Activated T-helper 2 cell treated with anti-CD3 and anti-CD28 coated beads, Interferon-gamma antibody, Interleukin-2, Interleukin-4, amounts not matched to agents 10 μg/mL and 5 μg/mL and 100 μg/mL, durations not matched to agents 14 hours and 24 hours and 36 hours (primary cell): ENCODE measurements at regions of chr16 and their contacts with region 1.

Region 1: GRCh38 chr16:8958344-8959167 is 5.2 kb downstream of the USP7 start:
- DNase-seq: peak; percentile 18
- H3K4me3 Mint-ChIP-seq: peak overlapping the region; percentile 75
- H3K27ac Mint-ChIP-seq: peak overlapping the region; percentile 77
- H3K4me1 Mint-ChIP-seq: peaks cover 67% of the 10 kb centered on the region
- H3K27me3 Mint-ChIP-seq: no peaks in the 10 kb centered on the region

Region 2: DNA sequence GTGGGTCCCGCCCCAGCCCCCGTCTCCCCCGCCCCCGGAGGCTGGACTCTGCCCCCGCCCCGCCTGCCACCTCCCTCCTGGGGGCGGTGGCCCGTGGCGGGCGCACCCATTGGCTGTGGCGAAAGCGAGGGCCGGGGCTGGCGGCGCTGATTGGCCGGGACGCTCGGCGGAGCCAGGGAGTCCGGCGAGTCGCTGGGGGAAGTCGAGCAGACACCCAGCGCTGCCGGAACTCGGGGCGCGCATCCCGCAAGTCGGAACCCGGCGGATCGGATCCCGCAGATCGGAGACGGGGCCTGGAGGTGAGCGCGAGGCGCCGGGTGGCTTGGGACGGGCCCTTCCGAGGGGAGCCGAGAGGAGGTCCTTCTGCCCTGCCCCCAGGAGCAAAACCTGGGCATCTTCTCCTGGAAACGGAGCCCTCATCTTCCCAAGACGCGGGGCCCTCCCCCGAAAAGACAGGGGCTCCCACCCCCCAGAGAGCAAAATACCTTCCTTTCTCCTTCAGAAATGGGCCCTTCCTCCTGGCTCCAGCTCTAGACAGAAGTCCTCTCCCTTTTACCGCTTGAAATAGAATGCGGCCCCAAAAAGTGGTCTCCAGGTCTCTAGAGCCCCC is 284.0 kb before region 1 on chr16 and contains the start of gene ABAT:
- intact Hi-C with region 1: loop called (anchors 5 kb)
- DNase-seq: peak; percentile 90
- H3K4me3 Mint-ChIP-seq: peak within 1 kb of the TSS; percentile 95
- H3K27ac Mint-ChIP-seq: peak within 1 kb of the TSS; percentile 95
- H3K4me1 Mint-ChIP-seq: peaks cover 38% of the 10 kb centered on the region
- H3K27me3 Mint-ChIP-seq: no peaks in the 10 kb centered on the region
- total RNA-seq, gene ABAT: 22.5 and 24.2 TPM in 2 replicates

Region 3: GRCh38 chr16:8936421-8936820 is 22.1 kb before region 1 on chr16:
- intact Hi-C with region 1: loop called (anchors 2 kb)
- DNase-seq: peak; percentile 62
- H3K4me3 Mint-ChIP-seq: no peak overlapping the region
- H3K27ac Mint-ChIP-seq: peak overlapping the region; percentile 36
- H3K4me1 Mint-ChIP-seq: peaks cover 41% of the 10 kb centered on the region
- H3K27me3 Mint-ChIP-seq: no peaks in the 10 kb centered on the region

Region 4: GRCh38 chr16:8943966-8944759 is 14.4 kb before region 1 on chr16:
- intact Hi-C with region 1: loop called (anchors 2 kb)
- DNase-seq: no peak
- H3K4me3 Mint-ChIP-seq: no peak overlapping the region
- H3K27ac Mint-ChIP-seq: peak overlapping the region; percentile 49
- H3K4me1 Mint-ChIP-seq: peaks cover 57% of the 10 kb centered on the region
- H3K27me3 Mint-ChIP-seq: no peaks in the 10 kb centered on the region

Region 5: DNA sequence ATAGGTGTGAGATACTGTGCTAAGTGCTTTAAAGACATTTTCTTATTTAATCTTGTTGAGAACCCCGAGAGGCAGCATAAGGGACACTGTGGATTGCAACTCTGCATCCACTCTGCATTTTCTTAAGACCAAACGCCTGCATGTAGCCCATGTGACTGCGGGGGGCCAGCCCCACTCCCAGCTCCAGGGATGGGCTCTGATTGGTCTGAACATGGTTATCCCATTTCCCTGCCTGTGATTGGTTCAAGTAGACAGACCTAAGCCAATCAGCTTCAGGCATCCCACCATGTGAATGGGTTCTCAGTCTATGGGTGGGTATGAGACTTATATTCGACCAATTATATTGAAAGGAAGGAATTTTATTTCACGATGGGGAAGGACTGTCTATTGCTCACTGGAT is 38.3 kb after region 1 on chr16:
- intact Hi-C with region 1: no loop called
- DNase-seq: no peak
- H3K4me3 Mint-ChIP-seq: no peak overlapping the region
- H3K27ac Mint-ChIP-seq: no peak overlapping the region
- H3K4me1 Mint-ChIP-seq: no peaks in the 10 kb centered on the region
- H3K27me3 Mint-ChIP-seq: no peaks in the 10 kb centered on the region

Region 6: GRCh38 chr16:9090960-9091866 is 132.7 kb after region 1 on chr16 and contains the start of gene HAPSTR1:
- intact Hi-C with region 1: loop called (anchors 2 kb)
- DNase-seq: peak; percentile 98
- H3K4me3 Mint-ChIP-seq: peak within 1 kb of the TSS; percentile 98
- H3K27ac Mint-ChIP-seq: peak within 1 kb of the TSS; percentile 95
- H3K4me1 Mint-ChIP-seq: peaks cover 25% of the 10 kb centered on the region
- H3K27me3 Mint-ChIP-seq: no peaks in the 10 kb centered on the region
- total RNA-seq, gene HAPSTR1: 54.5 and 54.9 TPM in 2 replicates

Region 7: GRCh38 chr16:9107025-9107970 is 148.7 kb after region 1 on chr16:
- intact Hi-C with region 1: no loop called
- DNase-seq: no peak
- H3K4me3 Mint-ChIP-seq: no peak overlapping the region
- H3K27ac Mint-ChIP-seq: peak overlapping the region; percentile 72
- H3K4me1 Mint-ChIP-seq: peaks cover 67% of the 10 kb centered on the region
- H3K27me3 Mint-ChIP-seq: no peaks in the 10 kb centered on the region